Gastrocnemius medialis (tissue), 4 donors: ENCODE measurements at regions of chr1 and their contacts with region 1.

Region 1: DNA sequence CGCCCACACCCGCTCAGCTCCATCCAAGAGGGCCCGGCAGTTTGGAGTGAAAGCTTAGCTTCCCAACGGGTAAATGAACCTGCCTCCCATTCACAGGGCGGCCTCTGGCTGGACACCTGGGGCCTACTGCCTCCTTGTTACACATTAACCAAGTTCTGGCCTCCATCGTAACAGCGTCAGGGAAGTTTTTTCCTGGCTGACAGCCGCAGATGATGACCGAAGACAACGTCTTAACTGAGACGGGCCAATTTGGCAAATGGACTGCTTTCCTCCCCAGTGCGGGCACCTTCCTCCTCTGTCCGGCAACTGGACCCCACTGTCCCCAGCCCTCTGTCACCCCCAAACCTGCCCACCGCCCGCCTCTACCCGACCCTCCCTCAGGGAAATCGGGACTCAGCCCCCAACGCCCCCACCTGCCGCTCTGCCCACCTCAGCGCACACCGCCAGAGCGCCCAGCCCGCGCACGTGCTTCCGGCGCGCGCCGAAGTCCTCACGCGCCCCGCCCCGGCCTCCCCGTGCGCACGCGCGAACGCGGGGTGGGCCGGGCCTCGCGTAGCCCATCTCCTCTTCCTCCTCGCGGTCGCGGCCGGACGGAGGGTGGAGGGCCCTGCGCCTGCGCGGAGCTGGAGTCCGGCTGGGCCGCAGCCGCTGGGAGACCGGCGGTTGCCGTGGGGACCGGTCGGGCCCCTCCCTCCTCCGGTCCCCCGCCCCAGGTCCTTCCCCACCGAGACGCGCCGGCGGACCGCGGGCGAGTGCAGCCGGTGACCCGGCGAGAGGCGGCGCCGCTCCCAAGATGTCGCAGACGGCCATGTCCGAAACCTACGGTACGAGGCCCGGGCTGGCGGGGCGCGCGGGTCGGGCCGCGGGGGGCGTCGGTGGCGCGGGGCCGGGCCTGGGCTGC is at the start of gene RAB4A:
- DNase-seq: peak; percentile 67 to 82
- ATAC-seq: peak; percentile 81 to 85
- H3K4me3 ChIP-seq: peak within 1 kb of the TSS; percentile 64 to 79 (median 74)
- H3K27ac ChIP-seq: peak within 1 kb of the TSS; percentile 75 to 93 (median 87)
- H3K4me1 ChIP-seq: peaks cover 34 to 55% of the 10 kb centered on the region in 2 donors
- H3K27me3 ChIP-seq: no peaks in the 10 kb centered on the region
- CTCF ChIP-seq: no peak
- POLR2A ChIP-seq: peak; percentile 75 to 83
- total RNA-seq, gene RAB4A: 21.1 to 48.1 (median 29.2) TPM

Region 2: GRCh38 chr1:229058729-229059128 is 212.1 kb before region 1 on chr1:
- in situ Hi-C with region 1: no loop called
- intact Hi-C with region 1: no loop called
- DNase-seq: no peak
- ATAC-seq: no peak
- H3K4me3 ChIP-seq: no peak overlapping the region
- H3K27ac ChIP-seq: peak overlapping the region in 2 of 4 donors; percentile 14 to 17
- H3K4me1 ChIP-seq: peaks cover 3 to 4% of the 10 kb centered on the region in 2 donors
- H3K27me3 ChIP-seq: no peaks in the 10 kb centered on the region
- CTCF ChIP-seq: no peak
- POLR2A ChIP-seq: no peak

Region 3: GRCh38 chr1:229341774-229342655 is 71.2 kb after region 1 on chr1:
- in situ Hi-C with region 1: loop called in 1 of 4 experiments (anchors 10 kb)
- intact Hi-C with region 1: loop called (anchors 5 kb)
- DNase-seq: peak; percentile 72 to 80
- ATAC-seq: peak; percentile 88 to 92
- H3K4me3 ChIP-seq: peak overlapping the region; percentile 75 to 99 (median 88)
- H3K27ac ChIP-seq: peak overlapping the region; percentile 78 to 93 (median 88)
- H3K4me1 ChIP-seq: peaks cover 6 to 15% of the 10 kb centered on the region in 2 donors
- H3K27me3 ChIP-seq: no peaks in the 10 kb centered on the region
- CTCF ChIP-seq: no peak
- POLR2A ChIP-seq: peak; percentile 59 to 73

Region 4: DNA sequence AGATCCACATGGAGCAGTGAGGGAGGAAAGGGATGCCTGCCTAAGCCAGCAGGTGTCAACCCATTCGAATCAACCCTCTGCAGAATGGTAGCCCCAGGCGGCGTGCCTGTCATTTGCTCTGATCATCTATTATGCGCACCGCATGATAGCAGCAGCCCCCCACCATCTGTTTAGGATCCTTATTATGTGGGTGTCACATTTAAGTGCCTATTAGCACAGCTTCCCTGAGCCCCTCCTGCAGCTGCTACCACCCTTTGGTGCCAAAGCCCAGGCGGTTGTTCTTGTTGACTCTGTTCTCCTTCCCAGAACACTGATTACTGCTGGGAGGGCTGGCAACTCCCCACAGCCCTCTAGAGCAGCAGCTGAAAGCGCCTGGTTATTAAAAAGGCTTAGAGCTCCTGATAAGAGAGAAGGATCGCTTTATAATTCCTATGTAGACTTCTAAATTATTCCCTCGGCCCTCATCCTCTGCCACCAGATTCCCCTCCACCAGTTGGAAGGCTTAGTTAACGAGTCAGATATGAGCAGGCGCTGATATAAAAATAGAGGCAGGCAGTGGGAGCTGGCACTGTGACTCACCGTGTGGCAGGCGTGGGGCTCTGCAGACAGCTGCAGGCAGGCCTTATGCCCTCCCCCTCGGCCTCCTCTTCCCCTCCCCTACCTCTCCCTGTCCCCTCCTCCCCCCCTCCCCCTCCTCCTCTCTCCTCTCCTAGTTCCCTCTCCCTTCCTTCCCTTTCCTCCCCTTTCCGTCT is 140.1 kb after region 1 on chr1:
- in situ Hi-C with region 1: no loop called
- intact Hi-C with region 1: loop called (anchors 2 kb)
- DNase-seq: peak; percentile 89 to 96
- ATAC-seq: peak; percentile 69 to 79
- H3K4me3 ChIP-seq: peak overlapping the region; percentile 2 to 23 (median 15)
- H3K27ac ChIP-seq: peak overlapping the region; percentile 89 to 95 (median 92)
- H3K4me1 ChIP-seq: peaks cover 53% of the 10 kb centered on the region in 2 donors
- H3K27me3 ChIP-seq: no peaks in the 10 kb centered on the region
- CTCF ChIP-seq: no peak
- POLR2A ChIP-seq: peak; percentile 61 to 63

Region 5: DNA sequence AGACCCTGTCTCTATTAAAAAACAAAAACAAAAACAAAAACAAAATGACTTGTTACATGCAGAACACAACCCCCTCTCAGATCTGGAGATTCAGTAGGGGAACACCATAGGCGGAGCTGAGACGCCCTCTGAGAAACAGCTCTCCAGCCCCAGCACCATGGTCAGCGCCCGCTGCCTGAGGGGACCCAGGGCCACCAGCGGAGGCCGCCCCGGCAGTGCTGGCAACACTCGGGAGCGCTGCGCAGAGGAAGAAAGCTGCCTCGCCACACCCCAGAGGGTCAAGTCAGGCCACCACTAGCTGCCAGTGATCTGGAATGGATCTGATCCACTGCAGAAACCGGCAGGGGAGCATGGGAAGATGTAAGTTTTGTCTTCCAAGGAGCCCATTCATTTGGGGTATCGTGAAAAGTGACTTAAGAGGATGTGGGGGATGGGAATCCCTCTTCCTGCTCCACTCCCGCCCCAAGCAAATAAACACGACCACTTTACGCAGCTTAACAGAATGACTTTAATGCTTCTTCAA is 160.0 kb after region 1 on chr1:
- in situ Hi-C with region 1: no loop called
- intact Hi-C with region 1: loop called (anchors 5 kb)
- DNase-seq: peak in 1 of 2 donors; percentile 85
- ATAC-seq: peak; percentile 37 to 39
- H3K4me3 ChIP-seq: peak overlapping the region in 1 of 4 donors; percentile 22
- H3K27ac ChIP-seq: peak overlapping the region; percentile 17 to 93 (median 48)
- H3K4me1 ChIP-seq: peaks cover 37 to 51% of the 10 kb centered on the region in 2 donors
- H3K27me3 ChIP-seq: peaks cover 0 to 16% (median 0%) of the 10 kb centered on the region in 3 donors
- CTCF ChIP-seq: peak in 2 of 5 experiments; percentile 23 to 45
- POLR2A ChIP-seq: no peak

Region 6: GRCh38 chr1:229507951-229508822 is 237.4 kb after region 1 on chr1 and contains the start of gene NUP133:
- in situ Hi-C with region 1: loop called in 1 of 4 experiments (anchors 10 kb)
- intact Hi-C with region 1: loop called (anchors 1 kb)
- DNase-seq: peak; percentile 98
- ATAC-seq: peak; percentile 96
- H3K4me3 ChIP-seq: peak within 1 kb of the TSS; percentile 82 to 91 (median 89)
- H3K27ac ChIP-seq: peak within 1 kb of the TSS; percentile 88 to 96 (median 94)
- H3K4me1 ChIP-seq: peaks cover 18 to 21% of the 10 kb centered on the region in 2 donors
- H3K27me3 ChIP-seq: no peaks in the 10 kb centered on the region
- CTCF ChIP-seq: no peak
- POLR2A ChIP-seq: peak; percentile 74 to 85
- total RNA-seq, gene NUP133: 18.4 to 30.8 (median 23.7) TPM

Region 7: GRCh38 chr1:230310381-230311163 is 1039.8 kb after region 1 on chr1:
- in situ Hi-C with region 1: loop called in 1 of 4 experiments (anchors 25 kb)
- intact Hi-C with region 1: no loop called
- DNase-seq: peak; percentile 42 to 67
- ATAC-seq: peak; percentile 85 to 91
- H3K4me3 ChIP-seq: no peak overlapping the region
- H3K27ac ChIP-seq: peak overlapping the region in 1 of 4 donors; percentile 40
- H3K4me1 ChIP-seq: peaks cover 0 to 8% of the 10 kb centered on the region in 2 donors
- H3K27me3 ChIP-seq: no peaks in the 10 kb centered on the region
- CTCF ChIP-seq: peak; percentile 87 to 93 (median 92)
- POLR2A ChIP-seq: no peak